Activated CD8-positive, alpha-beta memory T cell treated with anti-CD3 and anti-CD28 coated beads, Interleukin-2, amount 10 ng/mL, durations not matched to agents 7 days and 5 days (primary cell): ENCODE measurements at regions of chr20 and their contacts with region 1.

Region 1: GRCh38 chr20:17536944-17537444 is 5.8 kb upstream of the BFSP1 start:
- DNase-seq: peak; percentile 83
- ATAC-seq: peak; percentile 95
- H3K4me3 Mint-ChIP-seq: no peak overlapping the region
- H3K27ac Mint-ChIP-seq: no peak overlapping the region
- H3K4me1 Mint-ChIP-seq: peaks cover 38% of the 10 kb centered on the region
- H3K27me3 Mint-ChIP-seq: peaks cover 31% of the 10 kb centered on the region

Region 2: GRCh38 chr20:17611540-17612286 is 74.7 kb after region 1 on chr20:
- CTCF ChIA-PET with region 1: interaction called, 49 read pairs
- DNase-seq: peak; percentile 58
- ATAC-seq: no peak
- H3K4me3 Mint-ChIP-seq: peak overlapping the region; percentile 60
- H3K27ac Mint-ChIP-seq: peak overlapping the region; percentile 96
- H3K4me1 Mint-ChIP-seq: peaks cover 47% of the 10 kb centered on the region
- H3K27me3 Mint-ChIP-seq: no peaks in the 10 kb centered on the region

Region 3: GRCh38 chr20:17617551-17618223 is 80.7 kb after region 1 on chr20:
- CTCF ChIA-PET with region 1: interaction called, 49 read pairs
- DNase-seq: peak; percentile 69
- ATAC-seq: peak; percentile 54
- H3K4me3 Mint-ChIP-seq: no peak overlapping the region
- H3K27ac Mint-ChIP-seq: peak overlapping the region; percentile 28
- H3K4me1 Mint-ChIP-seq: peaks cover 10% of the 10 kb centered on the region
- H3K27me3 Mint-ChIP-seq: no peaks in the 10 kb centered on the region